A549 (cell line): ENCODE measurements at regions of chr9 and their contacts with region 1.

Region 1: GRCh38 chr9:128117613-128118471 is 9.7 kb downstream of the PTGES2 start:
- DNase-seq: peak; percentile 88 to 90
- ATAC-seq: peak; percentile 63 to 87; a peak in 4 of 6 replicates
- H3K4me3 ChIP-seq: no peak overlapping the region
- H3K27ac ChIP-seq: peak overlapping the region in 1 of 2 experiments; percentile 22; a peak in 1 of 6 replicates
- H3K4me1 ChIP-seq: 0 out of 3 replicates have a peak, but pooled peaks cover 2% of the 10 kb centered on the region
- CTCF ChIP-seq: peak; percentile 100
- EP300 ChIP-seq: no peak
- POLR2A ChIP-seq: no peak
- RAD21 ChIP-seq: peak; percentile 96 to 98

Region 2: DNA sequence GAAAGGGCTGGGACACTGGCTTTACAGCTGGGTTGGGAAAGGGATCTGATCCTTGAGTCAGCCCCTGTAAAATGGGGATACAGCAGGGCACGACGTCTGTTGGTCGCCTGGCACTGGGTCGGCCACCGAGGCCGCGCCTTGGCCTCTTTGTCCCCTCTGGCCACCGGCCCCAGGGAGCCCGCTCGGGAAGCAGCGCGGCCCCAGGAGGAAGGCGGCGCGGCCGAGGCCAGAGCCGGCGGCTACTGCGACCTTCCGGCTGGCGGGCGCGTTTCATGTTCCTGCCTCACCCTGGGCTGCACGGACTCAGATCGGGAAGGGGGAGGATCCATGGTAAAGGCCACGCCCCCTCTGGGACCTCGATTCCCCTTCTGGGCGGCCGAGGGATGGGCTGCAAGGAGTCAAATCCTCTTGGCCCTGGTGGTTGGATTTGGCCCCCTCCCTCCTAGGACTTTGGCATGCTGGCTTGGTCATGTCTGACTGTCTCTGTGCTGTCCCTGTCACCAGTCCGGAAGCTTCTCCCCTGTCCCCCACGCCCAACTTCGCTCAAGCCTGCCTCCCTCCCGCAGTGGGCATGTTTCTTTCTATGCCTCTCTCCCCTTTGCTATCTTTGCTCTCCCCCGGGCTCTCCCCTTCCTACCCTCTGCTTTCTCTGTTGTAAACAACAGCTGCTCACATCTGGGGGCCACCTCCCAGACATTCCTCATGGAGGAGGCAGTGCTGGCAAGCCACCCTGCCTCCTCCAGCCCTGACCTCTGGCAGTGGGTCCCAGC is 289.4 kb before region 1 on chr9:
- CTCF ChIA-PET with region 1: no interaction called
- POLR2A ChIA-PET with region 1: no interaction called
- DNase-seq: peak; percentile 62 to 87
- ATAC-seq: peak; percentile 68 to 79
- H3K4me3 ChIP-seq: peak overlapping the region; percentile 32
- H3K27ac ChIP-seq: peak overlapping the region; percentile 66 to 77
- H3K4me1 ChIP-seq: peaks cover 9% of the 10 kb centered on the region
- CTCF ChIP-seq: no peak
- EP300 ChIP-seq: no peak
- POLR2A ChIP-seq: peak; percentile 24; the same call in 1 of the 2 replicates
- RAD21 ChIP-seq: no peak

Region 3: DNA sequence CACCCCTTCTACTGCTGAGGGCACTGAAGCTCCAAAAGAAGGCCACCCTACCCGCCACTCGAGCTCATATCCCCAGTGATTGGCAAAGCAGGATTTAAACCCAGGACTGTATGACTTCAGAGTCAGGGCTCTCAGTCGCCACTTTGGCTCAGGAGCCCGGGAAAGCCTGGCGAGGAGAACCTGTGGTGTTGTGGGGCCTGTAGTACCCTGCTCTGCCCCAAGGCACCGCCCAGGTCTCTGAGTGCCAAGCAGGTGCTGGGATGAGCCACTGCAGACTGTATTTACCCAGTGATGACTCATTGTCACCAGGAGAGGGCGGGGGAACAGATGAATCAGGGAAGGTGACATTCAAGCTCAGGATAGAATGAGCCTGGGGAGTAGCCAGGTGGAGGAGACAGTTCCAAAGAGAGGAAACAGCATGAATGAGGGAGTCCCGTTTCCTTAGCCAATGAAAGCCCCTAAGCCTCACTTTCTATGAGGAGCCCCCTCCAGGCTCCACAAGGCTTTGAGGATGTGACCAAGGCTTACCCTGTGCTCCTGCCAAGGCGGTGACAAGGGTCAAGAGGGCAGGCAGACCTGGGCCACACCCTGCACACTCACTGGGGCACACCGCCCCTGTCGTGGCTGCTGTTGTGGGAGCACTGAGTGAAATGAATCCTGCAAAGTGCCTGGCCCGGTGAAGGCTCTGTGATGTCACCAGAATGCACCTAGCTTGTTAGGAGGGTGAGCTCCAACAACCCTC is 162.4 kb before region 1 on chr9:
- CTCF ChIA-PET with region 1: interaction called, 16 read pairs
- POLR2A ChIA-PET with region 1: no interaction called
- DNase-seq: peak; percentile 89 to 99
- ATAC-seq: peak; percentile 91 to 92
- H3K4me3 ChIP-seq: peak overlapping the region; percentile 12; the same call in 1 of the 3 replicates
- H3K27ac ChIP-seq: peak overlapping the region; percentile 75 to 84
- H3K4me1 ChIP-seq: peaks cover 61% of the 10 kb centered on the region
- CTCF ChIP-seq: 0 out of 3 replicates have a peak, but pooled peaks have one; percentile 15
- EP300 ChIP-seq: no peak; a peak in 1 of 5 replicates
- POLR2A ChIP-seq: no peak
- RAD21 ChIP-seq: peak; percentile 37 to 42; a peak in 2 of 5 replicates

Region 4: DNA sequence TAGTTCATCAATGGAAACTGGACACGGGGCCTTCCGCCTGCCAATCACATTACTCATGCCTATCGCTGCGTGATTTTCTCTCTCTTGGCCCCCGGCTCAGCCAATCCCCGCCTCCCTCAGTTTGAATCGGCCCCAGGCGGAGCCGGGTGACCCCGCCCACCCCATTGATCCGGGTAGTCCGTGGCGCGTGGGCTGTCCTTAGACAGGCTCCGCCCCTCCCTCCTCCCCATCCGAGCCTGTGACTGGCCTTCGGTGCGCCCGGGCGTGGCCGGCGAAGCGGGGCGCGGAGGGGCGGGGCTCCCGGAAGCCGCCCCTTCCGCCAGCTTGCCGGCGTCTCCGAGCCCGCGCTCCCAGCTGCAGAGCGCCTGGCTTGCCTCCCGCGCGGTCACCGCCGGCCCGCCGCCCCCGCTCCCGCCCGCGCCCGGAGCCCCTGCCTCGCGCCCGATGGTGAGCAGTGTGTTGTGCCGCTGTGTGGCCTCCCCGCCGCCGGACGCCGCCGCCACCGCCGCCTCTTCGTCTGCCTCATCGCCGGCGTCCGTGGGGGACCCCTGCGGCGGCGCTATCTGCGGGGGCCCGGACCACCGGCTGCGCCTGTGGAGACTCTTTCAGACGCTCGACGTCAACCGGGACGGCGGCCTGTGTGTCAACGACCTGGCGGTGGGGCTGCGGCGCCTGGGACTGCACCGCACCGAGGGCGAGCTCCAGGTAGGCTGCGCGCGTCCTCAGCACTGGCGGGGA is 49.8 kb before region 1 on chr9 and contains the start of gene SLC25A25:
- CTCF ChIA-PET with region 1: interaction called, 11 read pairs
- POLR2A ChIA-PET with region 1: interaction called, 3 read pairs
- DNase-seq: peak; percentile 96 to 99
- ATAC-seq: peak; percentile 80 to 86
- H3K4me3 ChIP-seq: peak within 1 kb of the TSS; percentile 84
- H3K27ac ChIP-seq: peak within 1 kb of the TSS; percentile 93 to 99
- H3K4me1 ChIP-seq: peaks cover 41% of the 10 kb centered on the region
- CTCF ChIP-seq: no peak
- EP300 ChIP-seq: no peak
- POLR2A ChIP-seq: peak; percentile 70
- RAD21 ChIP-seq: no peak; a peak in 1 of 5 replicates
- polyA plus RNA-seq, gene SLC25A25: 7.0 TPM in 2 replicates

Region 5: DNA sequence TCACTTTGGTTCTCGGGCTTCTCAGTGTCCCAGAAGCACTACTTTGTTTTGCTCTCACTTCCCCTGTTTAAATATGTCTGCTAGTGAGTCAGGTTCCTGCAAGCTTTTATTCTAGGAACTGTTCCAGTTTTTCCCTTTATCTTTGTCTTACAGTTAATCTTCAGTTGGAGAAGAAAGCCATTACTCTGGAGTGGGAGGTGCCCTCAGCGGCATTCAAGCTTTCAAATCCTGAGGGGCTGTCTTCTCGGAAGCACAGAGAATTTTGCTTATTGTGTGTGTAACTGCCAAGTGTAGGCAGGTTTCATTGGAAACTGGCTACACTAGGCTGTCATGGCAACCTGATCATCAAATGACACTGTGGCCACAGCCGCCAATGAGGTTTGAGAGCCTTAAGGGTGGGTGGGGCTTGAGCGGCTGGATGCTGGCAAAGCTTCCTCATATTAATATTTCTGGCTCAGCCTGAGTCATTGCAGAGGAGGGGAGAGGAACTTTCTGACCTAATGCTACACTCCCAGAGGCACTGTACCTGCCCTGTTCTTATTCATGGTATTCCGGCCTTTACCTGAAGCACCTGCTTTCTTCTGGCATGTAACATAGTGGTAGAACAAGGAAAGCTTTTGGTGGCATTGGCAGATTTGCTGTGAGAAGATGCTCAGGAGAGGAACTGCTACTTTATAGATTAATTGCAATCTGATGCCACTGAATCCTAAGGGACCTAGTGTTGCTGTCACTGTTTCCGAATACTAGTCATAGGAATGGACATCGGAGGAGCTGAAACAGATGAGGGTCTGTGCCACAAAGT is 23.5 kb before region 1 on chr9:
- CTCF ChIA-PET with region 1: interaction called, 290 read pairs
- POLR2A ChIA-PET with region 1: interaction called, 3 read pairs
- DNase-seq: peak; percentile 94
- ATAC-seq: peak; percentile 75 to 83
- H3K4me3 ChIP-seq: no peak overlapping the region
- H3K27ac ChIP-seq: peak overlapping the region; percentile 20 to 68; a peak in 4 of 6 replicates
- H3K4me1 ChIP-seq: peaks cover 35% of the 10 kb centered on the region
- CTCF ChIP-seq: no peak
- EP300 ChIP-seq: no peak
- POLR2A ChIP-seq: no peak
- RAD21 ChIP-seq: no peak

Region 6: GRCh38 chr9:128150594-128151308 is 32.9 kb after region 1 on chr9:
- CTCF ChIA-PET with region 1: interaction called, 24 read pairs
- POLR2A ChIA-PET with region 1: no interaction called
- DNase-seq: peak; percentile 33 to 42
- ATAC-seq: peak; percentile 14 to 73; a peak in 3 of 6 replicates
- H3K4me3 ChIP-seq: no peak overlapping the region
- H3K27ac ChIP-seq: peak overlapping the region; percentile 76 to 82; a peak in 5 of 6 replicates
- H3K4me1 ChIP-seq: peaks cover 31% of the 10 kb centered on the region
- CTCF ChIP-seq: peak; percentile 9; the same call in 1 of the 3 replicates
- EP300 ChIP-seq: no peak
- POLR2A ChIP-seq: no peak
- RAD21 ChIP-seq: no peak

Region 7: DNA sequence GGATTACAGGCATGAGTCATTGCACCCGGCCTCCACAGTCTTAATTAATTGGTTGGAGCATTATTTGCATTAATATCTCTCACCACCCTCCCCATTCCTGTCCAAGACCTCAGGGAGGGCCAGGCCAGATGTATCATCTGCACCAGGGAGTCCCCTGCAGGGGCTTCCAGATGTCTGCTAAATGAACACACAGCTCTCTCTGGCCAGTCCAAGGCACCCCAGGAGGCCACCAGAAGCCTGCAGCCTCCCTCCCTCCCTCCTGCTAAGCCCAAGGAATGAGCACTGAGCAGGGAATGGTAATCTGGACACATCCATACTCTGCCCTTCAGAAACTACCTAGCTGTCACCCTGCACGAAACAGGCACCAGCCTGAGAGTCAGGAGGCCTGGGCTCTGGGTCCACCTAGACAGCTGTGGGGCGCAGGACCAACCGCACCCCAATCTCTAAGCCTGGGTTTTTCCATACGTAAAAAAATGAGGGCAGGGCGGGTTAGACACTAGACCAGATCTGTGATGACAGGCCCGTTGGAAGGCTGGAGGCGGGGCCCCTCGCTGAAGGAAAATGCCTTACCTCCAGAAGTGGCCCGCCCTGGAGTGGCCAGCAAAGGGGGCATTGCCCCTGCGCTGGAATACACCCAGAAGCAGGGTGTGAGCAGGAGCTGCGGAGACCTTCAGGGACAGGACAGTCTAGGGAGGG is 65.2 kb after region 1 on chr9:
- CTCF ChIA-PET with region 1: interaction called, 12 read pairs
- POLR2A ChIA-PET with region 1: no interaction called
- DNase-seq: no peak
- ATAC-seq: peak; percentile 12 to 43; a peak in 4 of 6 replicates
- H3K4me3 ChIP-seq: no peak overlapping the region
- H3K27ac ChIP-seq: no peak overlapping the region
- H3K4me1 ChIP-seq: no peaks in the 10 kb centered on the region
- CTCF ChIP-seq: no peak
- EP300 ChIP-seq: no peak
- POLR2A ChIP-seq: no peak
- RAD21 ChIP-seq: no peak